ENCODE measurements at regions of chr20 and their contacts with region 1.

Region 1: DNA sequence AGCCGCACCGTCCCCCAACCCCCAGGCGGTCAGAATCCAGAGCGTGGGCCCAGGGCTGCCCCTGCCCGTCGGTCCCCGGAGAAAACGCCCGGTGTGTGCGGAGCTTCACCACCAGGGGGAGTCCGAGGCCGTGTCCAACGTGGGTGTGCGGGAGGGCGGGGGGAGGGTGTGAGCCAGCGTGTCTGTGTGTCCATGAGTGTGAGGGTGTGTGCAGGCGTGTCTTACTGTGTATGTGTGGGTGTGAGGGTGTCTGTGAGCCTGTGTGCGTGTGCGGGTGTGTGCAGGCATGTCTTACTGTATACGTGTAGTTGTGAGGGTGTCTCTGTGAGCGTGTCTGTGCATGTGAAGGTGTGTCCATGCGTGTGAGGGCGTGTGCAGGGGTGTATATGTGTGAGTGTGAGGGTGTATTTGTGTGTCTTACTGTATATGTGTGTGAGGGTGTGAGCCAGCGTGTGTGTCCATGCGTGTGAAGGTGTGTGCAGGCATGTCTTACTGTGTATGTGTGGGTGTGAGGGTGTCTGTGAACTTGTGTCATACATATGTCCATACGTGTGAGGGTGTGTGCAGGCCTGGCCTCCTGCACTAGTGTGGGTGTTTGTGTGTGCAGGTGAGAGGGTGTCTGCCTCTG is 24.6 kb upstream of the GATA5 start:
- DNase-seq: peak; percentile 87
- ATAC-seq: peak; percentile 80

Region 2: GRCh38 chr20:62587757-62588402 is 87.5 kb after region 1 on chr20:
- intact Hi-C with region 1: loop called (anchors 10 kb)
- DNase-seq: no peak
- ATAC-seq: no peak

Region 3: DNA sequence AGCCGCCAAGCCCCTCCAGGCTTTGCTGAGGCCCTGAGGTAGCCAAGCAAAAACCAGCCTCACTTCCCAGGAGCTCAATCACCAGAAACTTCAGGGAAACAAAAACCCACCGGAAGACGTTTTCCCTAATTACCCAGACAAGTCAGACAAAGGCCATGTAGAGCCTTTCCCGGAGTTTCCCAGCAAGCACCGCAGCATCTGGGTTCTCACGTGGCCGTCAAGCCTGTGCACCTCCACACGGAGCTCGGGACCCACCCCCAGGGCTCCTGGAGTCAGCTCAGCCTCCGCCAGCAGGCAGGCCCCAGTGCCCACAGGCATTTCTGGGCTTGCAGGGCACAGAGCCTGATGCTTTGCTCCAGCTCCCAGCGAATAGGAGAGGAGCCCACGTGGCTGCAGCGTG is 285.8 kb after region 1 on chr20:
- intact Hi-C with region 1: loop called (anchors 5 kb)
- DNase-seq: no peak
- ATAC-seq: no peak